Posterior vena cava (tissue), 2 donors: ENCODE measurements at regions of chr11 and their contacts with region 1.

Region 1: GRCh38 chr11:100727410-100727809 is 40.3 kb downstream of the ARHGAP42 start:
- DNase-seq: no peak

Region 2: GRCh38 chr11:100687630-100688395 is 39.6 kb before region 1 on chr11:
- intact Hi-C with region 1: loop called in 1 of 2 experiments (anchors 5 kb)
- DNase-seq: no peak

Region 3: DNA sequence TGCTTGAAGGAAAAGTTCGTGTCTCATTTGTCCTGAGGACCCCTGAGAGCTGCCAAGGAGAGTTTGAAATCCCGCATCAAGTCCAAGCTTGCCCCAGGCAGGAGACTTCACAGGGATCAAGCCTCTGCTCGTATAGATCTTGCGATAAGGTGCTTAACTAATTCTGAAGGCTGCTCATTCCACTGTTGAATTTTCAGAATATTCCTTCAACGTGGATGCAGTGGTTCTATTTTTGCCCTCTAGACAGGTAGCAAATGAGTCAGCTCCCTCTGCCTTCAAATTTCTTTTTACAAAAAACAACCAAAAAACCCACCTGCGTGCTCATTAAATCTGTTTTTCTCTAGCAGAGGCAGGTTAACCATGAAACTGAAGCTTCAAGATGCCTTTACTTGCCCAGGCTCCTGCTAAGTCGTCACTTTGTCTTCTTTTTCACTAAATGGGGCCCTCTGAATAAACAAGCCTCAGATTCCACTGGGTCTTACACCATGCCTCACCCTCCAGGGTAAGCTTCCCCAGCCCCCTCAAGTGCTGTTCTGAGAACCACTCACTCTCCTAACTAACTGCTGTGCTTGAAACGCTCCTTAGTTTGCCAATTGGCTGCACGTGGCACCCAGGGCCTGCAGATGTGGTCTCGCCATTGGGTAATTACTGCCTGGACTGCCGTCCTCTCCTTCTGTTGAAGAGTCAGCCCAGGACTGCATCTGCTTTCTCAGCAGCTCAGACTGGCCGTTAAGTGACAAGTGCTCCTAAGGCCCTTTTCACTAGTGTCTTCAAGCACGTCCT is 751.4 kb after region 1 on chr11:
- intact Hi-C with region 1: no loop called
- DNase-seq: no peak